ENCODE measurements at regions of chr1 and their contacts with region 1.

Region 1: DNA sequence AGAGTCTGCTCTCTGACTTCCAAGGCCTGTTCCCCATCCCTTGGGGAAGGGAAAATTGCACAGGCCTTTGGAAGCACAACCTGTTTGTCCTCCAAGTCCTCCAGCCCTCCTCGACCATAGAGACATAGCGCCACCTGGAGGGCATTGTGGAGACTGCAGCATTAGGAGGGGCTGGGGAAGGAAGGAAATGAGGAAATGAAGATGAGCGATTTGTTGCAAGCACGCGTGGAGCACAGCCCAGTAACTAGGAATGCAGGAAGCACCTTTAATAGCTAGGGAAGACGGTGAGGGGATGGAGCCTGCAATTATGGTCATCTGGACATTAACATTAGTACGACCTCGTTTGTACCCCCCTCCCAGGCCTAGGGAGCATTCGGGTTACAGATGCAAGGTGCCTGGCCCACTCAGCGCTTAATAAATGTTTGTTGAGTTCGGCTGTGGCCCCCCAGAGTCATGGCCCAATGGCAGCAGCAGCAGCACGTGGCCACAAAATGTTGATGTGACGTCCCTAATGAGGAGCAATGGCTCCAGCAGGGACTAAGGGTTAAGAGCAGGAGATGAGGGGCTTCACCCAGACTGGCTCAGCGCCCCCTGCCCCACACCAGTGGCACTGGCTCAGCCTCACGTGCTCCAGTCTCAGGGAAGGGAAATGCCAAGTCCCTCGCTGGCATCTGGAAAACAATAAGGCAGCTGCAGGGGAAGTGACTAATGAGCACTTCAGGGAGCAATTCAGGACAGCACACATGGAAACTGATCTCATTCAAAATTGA is 8.0 kb upstream of the CAMK2N1 start:
- DNase-seq: peak; percentile 70 to 89 (median 84)
- H3K4me3 ChIP-seq: peak overlapping the region in 21 of 59 donors; percentile 6 to 44 (median 29)
- H3K27ac ChIP-seq: peak overlapping the region in 57 of 59 donors; percentile 19 to 90 (median 74)
- H3K27me3 ChIP-seq: no peaks in the 10 kb centered on the region
- CTCF ChIP-seq: peak; percentile 93 to 100 (median 98)

Region 2: DNA sequence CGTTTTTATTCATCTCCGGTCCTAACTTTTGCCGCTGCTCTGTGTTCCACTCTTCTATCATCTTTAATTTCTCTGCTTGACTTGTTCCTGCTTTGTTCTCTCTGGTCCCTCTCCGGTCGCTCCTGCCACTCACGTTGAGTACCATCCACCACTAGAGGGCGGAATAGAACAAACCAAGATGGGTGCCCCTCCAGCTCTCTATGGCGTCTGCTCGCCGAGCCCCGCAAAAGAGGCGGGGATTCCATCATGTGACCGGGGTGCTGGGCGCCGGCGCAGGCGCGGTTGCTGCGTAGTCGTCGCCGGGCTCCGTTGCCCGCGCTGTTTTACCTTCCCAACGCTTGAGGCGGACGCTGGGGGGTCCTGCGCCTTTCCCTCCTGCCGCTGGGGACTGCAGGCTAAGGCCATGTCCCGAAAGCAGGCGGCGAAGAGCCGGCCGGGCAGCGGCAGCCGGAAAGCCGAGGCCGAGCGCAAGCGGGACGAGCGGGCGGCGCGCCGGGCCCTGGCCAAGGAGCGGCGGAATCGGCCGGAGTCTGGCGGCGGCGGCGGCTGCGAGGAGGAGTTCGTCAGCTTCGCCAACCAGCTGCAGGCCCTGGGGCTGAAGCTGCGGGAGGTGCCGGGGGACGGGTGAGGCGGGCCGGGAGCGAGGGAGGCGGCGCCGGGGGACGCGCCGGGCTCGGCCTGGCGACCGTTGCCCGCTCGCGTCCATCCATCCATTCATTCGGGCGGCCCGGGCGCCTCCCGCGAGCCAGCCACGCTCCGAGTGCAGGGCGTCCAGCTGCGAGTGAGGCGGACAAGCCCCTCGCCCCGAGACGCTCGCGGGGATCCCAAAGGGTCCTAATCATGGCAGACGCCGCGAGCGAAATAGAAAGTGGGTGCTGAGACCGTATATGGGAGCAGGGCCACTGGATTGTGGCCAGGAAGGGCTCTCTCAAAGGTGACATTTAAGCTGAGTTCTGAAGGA is 611.6 kb before region 1 on chr1 and contains the start of gene OTUD3:
- intact Hi-C with region 1: loop called in 1 of 2 experiments (anchors 10 kb)
- DNase-seq: peak; percentile 83 to 96 (median 94)
- H3K4me3 ChIP-seq: peak within 1 kb of the TSS; percentile 49 to 99 (median 90)
- H3K27ac ChIP-seq: peak within 1 kb of the TSS; percentile 6 to 96 (median 89)
- H3K27me3 ChIP-seq: peaks cover 0 to 7% (median 0%) of the 10 kb centered on the region in 45 donors
- CTCF ChIP-seq: peak; percentile 91 to 100 (median 98)
- total RNA-seq, gene OTUD3: 16.6 to 72.2 (median 30.5) TPM

Region 3: DNA sequence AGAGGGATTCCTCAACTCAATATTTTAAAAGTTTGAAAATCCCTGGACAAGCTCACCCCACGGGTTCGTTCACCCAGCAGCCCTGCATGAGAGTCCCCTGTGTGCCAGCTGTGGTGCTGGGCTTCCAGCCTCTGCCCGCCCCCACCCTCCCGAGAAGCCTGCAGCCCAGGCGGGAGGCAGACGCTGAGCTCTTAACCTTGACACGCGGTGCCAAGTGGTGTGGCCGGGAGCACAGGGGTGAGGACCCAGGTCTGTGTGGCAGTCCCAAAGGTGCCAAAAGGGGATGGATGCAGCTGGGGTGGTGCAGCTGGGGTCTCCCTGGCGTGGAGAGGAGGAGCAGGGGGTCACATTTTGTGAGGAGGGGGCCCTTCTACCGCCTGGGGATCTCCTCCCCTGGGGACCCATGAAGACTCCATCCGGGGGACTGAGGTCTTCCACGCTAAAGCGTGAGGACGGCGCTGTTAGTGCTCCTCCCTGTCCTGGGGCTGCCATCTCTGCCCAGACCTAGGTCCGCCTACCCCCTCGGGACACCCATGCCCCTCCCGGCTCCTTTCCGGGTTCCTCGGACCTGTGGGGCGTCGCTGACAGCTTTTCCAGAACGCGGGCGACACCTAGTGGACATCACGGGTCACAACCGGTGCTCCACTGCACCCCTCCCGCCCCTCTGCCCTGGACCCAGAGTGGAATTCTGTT is 342.0 kb before region 1 on chr1:
- intact Hi-C with region 1: loop called in 1 of 2 experiments (anchors 10 kb)
- DNase-seq: peak; percentile 69 to 84 (median 76)
- H3K4me3 ChIP-seq: peak overlapping the region; percentile 8 to 68 (median 50)
- H3K27ac ChIP-seq: peak overlapping the region in 50 of 59 donors; percentile 38 to 91 (median 78)
- H3K27me3 ChIP-seq: no peaks in the 10 kb centered on the region
- CTCF ChIP-seq: peak; percentile 78 to 99 (median 95)

Region 4: DNA sequence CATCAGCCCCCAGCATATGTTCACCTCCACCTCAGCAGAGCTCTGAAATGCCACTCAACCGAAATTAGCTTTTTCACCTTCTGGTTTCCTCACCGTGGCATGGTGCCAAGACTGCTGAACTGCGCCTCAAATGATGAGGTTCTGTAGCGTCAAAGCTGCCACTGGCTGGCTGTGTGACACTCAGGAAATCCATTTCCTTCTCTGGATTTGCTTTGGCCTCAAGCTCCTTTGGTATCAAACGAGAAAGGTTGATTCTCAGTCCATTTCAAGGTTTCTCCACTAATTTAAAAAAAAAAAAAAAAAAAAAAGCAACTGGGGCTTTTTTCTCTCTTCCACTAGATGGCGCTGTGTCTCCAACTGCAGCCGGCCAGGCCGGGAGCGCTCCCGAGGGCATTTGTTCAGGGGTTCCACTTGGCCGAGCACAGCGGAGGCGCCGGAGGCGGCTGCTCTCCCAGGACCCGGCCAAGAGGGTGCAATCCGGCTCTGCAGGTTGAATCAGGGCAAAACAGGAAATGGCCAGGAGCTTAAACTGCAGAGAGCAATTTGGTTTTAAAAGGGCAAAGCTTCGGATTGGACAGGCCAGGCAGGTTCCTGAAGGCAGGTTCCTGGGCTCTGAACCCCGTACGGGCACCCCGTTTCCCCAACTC is 281.2 kb before region 1 on chr1:
- intact Hi-C with region 1: loop called (anchors 2 to 5 kb)
- DNase-seq: peak; percentile 33 to 73 (median 51)
- H3K4me3 ChIP-seq: peak overlapping the region in 14 of 59 donors; percentile 3 to 40 (median 22)
- H3K27ac ChIP-seq: peak overlapping the region in 2 of 59 donors; percentile 5 to 16
- H3K27me3 ChIP-seq: no peaks in the 10 kb centered on the region
- CTCF ChIP-seq: peak; percentile 62 to 91 (median 77)

Region 5: DNA sequence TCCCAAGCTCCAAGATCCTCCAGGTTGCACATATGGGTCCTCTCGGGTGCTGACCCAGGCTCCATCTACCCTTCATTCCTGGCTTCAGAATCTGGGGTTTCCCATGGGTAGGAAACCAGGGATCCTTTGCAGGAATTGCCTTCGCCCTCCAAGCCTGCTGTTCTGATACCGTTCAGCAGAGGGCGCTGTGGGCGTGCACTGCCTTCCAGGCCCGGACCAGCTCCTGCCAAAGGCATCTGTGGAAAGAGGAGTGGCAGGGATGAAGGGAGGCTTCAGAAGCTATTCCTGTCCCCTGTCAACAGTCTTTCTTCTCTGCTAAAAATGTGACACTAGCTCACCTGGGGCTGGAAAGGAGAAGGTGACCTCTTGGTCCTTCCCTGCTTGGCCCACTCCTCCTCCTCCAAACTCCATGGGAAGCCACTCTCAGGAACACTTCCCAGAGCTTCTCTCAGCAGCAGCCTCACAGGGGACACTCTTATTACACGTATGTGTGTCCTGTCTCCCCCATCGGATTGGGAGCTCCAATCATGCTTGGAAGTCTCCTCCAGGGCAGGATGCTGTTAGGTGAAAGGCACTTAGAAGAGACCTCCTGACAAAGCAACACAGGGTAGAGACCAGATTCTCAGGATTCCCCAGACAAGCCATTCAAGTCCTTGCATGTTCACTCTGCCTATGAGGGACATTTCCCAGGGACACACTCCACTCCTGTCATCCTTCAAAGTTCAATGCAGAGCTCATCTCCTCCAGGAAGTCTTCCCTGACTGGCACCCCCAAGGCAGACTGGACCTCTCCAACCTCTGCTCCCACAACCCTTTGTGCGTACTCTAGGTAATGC is 132.0 kb before region 1 on chr1:
- intact Hi-C with region 1: loop called (anchors 1 to 5 kb)
- DNase-seq: peak; percentile 71 to 90 (median 82)
- H3K4me3 ChIP-seq: no peak overlapping the region
- H3K27ac ChIP-seq: peak overlapping the region in 9 of 59 donors; percentile 2 to 52 (median 31)
- H3K27me3 ChIP-seq: peaks cover 0 to 20% (median 0%) of the 10 kb centered on the region in 45 donors
- CTCF ChIP-seq: peak; percentile 61 to 96 (median 88)

Region 6: GRCh38 chr1:20430355-20431175 is 63.5 kb before region 1 on chr1:
- intact Hi-C with region 1: loop called (anchors 2 to 5 kb)
- DNase-seq: peak in 1 of 10 donors; percentile 60
- H3K4me3 ChIP-seq: no peak overlapping the region
- H3K27ac ChIP-seq: peak overlapping the region in 34 of 59 donors; percentile 18 to 80 (median 57)
- H3K27me3 ChIP-seq: no peaks in the 10 kb centered on the region
- CTCF ChIP-seq: peak; percentile 31 to 76 (median 62)

Region 7: GRCh38 chr1:21232044-21232443 is 738.0 kb after region 1 on chr1:
- intact Hi-C with region 1: no loop called
- DNase-seq: peak in 2 of 10 donors; percentile 56 to 70
- H3K4me3 ChIP-seq: no peak overlapping the region
- H3K27ac ChIP-seq: no peak overlapping the region
- H3K27me3 ChIP-seq: no peaks in the 10 kb centered on the region
- CTCF ChIP-seq: peak; percentile 73 to 95 (median 82)

Measured in dorsolateral prefrontal cortex (tissue), 120 donors.